Transverse colon (tissue), 4 donors: ENCODE measurements at regions of chr6 and their contacts with region 1.

Region 1: GRCh38 chr6:8429821-8430220 is 5.5 kb downstream of the SLC35B3 start:
- DNase-seq: no peak
- H3K4me3 ChIP-seq: no peak overlapping the region
- H3K27ac ChIP-seq: no peak overlapping the region
- H3K4me1 ChIP-seq: peaks cover 0 to 25% (median 14%) of the 10 kb centered on the region in 4 donors
- H3K27me3 ChIP-seq: no peaks in the 10 kb centered on the region
- CTCF ChIP-seq: no peak
- EP300 ChIP-seq: no peak
- POLR2A ChIP-seq: no peak

Region 2: GRCh38 chr6:7827142-7827541 is 602.7 kb before region 1 on chr6:
- in situ Hi-C with region 1: no loop called
- intact Hi-C with region 1: loop called (anchors 5 kb)
- DNase-seq: no peak
- H3K4me3 ChIP-seq: no peak overlapping the region
- H3K27ac ChIP-seq: no peak overlapping the region
- H3K4me1 ChIP-seq: no peaks in the 10 kb centered on the region
- H3K27me3 ChIP-seq: no peaks in the 10 kb centered on the region
- CTCF ChIP-seq: no peak
- EP300 ChIP-seq: no peak
- POLR2A ChIP-seq: no peak